ENCODE measurements at regions of chr2 and their contacts with region 1.

Region 1: DNA sequence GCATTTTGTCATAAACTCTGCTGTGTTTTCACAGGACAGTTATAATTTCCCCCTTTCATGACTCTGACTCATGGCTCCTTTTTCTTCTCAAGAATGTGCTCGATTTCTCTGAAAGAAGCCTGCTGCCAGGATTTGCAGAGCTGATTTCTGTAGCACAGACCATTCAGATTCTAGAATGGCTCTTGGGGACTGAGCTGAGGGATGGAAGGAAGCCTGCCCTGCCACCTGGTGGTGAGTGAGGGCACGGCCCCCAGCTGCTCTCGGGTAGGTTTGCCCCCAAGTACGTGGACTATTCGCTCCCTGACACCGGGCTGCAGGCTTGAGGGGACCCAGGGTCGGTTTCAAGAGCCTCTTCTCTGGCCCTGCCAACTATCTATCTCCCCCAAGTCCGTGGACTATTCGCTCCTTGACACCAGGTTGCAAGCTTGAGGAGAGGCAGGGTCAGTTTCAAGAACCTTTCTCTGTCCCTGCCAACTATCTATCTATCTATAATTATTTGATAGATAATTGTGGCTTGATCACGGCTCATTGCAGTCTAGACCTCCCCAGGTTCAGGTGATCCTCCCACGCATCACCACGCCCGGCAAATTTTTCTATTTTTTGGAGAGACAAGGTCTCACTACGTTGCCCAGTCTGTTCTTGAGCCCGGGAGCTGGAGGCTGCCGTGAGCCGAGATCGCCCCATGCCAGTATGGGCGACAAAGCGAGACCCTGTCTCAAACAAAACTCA is 1.4 kb upstream of the SMYD5 start:
- DNase-seq: peak; percentile 58 to 70 (median 65)
- H3K4me3 ChIP-seq: no peak overlapping the region
- H3K4me3 Mint-ChIP-seq: peak overlapping the region; percentile 45 to 83 (median 58)
- H3K27ac ChIP-seq: no peak overlapping the region
- H3K27ac Mint-ChIP-seq: peak overlapping the region in 5 of 7 donors; percentile 23 to 97 (median 76)
- H3K4me1 ChIP-seq: peaks cover 33% of the 10 kb centered on the region
- H3K4me1 Mint-ChIP-seq: peaks cover 25 to 38% (median 31%) of the 10 kb centered on the region in 4 donors
- H3K27me3 ChIP-seq: no peaks in the 10 kb centered on the region
- H3K27me3 Mint-ChIP-seq: peaks cover 8 to 9% of the 10 kb centered on the region in 2 donors

Region 2: GRCh38 chr2:73035899-73036711 is 176.5 kb before region 1 on chr2:
- CTCF ChIA-PET with region 1: no interaction called
- POLR2A ChIA-PET with region 1: no interaction called
- intact Hi-C with region 1: no loop called
- DNase-seq: no peak
- H3K4me3 ChIP-seq: no peak overlapping the region
- H3K4me3 Mint-ChIP-seq: no peak overlapping the region
- H3K27ac ChIP-seq: no peak overlapping the region
- H3K27ac Mint-ChIP-seq: peak overlapping the region in 1 of 7 donors; percentile 58
- H3K4me1 ChIP-seq: no peaks in the 10 kb centered on the region
- H3K4me1 Mint-ChIP-seq: no peaks in the 10 kb centered on the region
- H3K27me3 ChIP-seq: no peaks in the 10 kb centered on the region
- H3K27me3 Mint-ChIP-seq: no peaks in the 10 kb centered on the region

Region 3: DNA sequence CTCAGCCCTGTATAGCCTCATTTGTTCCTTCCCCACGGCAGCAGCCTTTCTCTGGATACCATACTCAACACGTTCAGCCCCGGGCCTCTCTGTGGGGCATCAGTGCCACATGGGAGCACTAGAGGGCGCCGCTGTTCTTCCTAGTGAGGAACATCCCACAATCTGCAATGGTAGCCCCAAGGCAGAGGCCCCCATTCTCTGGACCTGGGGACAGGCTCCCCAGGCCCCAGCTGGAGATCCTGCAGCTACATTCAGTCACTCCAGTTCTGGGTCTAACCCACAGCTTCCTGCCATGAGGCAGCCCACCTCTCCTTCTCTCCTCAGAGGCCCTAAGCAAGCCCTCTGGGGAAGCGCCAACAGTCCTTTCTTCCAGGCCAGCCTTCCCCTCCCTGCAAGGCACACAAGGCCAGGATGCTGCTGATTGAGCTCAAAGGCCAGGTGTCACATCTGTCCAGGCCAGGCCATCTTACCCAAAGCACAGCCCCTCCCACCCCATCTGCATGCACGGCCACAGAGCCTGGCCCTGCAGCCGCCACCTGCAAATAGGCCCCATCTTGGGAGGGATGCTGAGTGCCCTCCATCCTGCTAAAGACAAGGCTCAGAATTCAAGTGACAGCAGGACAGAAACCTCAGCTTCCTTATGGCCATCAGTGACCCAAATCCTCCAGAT is 126.8 kb before region 1 on chr2:
- CTCF ChIA-PET with region 1: interaction called, 62 read pairs
- POLR2A ChIA-PET with region 1: no interaction called
- intact Hi-C with region 1: no loop called
- DNase-seq: peak; percentile 71 to 80 (median 74)
- H3K4me3 ChIP-seq: no peak overlapping the region
- H3K4me3 Mint-ChIP-seq: no peak overlapping the region
- H3K27ac ChIP-seq: no peak overlapping the region
- H3K27ac Mint-ChIP-seq: peak overlapping the region in 4 of 7 donors; percentile 23 to 53 (median 37)
- H3K4me1 ChIP-seq: no peaks in the 10 kb centered on the region
- H3K4me1 Mint-ChIP-seq: peaks cover 1 to 8% (median 4%) of the 10 kb centered on the region in 4 donors
- H3K27me3 ChIP-seq: no peaks in the 10 kb centered on the region
- H3K27me3 Mint-ChIP-seq: no peaks in the 10 kb centered on the region

Region 4: DNA sequence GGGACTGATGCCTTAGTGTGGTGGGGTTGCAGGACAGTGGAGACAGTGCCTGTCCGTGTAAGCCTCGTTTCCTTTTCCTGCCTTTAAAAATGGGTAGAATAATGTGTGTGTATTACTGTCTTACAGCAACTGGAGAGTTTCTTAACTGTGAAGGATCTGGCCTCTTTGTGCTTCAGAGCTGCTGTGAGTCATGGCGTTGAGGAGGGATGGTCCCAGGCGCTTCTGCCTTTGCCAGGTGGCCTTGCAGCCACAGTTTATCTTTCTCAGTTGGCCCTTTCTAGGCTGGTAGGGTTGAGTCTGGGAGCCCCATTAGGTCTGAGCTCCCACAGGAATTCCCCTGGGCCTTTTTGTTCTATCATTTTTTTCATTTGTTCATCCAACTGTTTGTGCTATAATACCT is 11.2 kb after region 1 on chr2:
- CTCF ChIA-PET with region 1: interaction called, 23 read pairs
- POLR2A ChIA-PET with region 1: interaction called, 3 read pairs
- intact Hi-C with region 1: no loop called
- DNase-seq: no peak
- H3K4me3 ChIP-seq: no peak overlapping the region
- H3K4me3 Mint-ChIP-seq: no peak overlapping the region
- H3K27ac ChIP-seq: no peak overlapping the region
- H3K27ac Mint-ChIP-seq: no peak overlapping the region
- H3K4me1 ChIP-seq: no peaks in the 10 kb centered on the region
- H3K4me1 Mint-ChIP-seq: peaks cover 0 to 6% (median 0%) of the 10 kb centered on the region in 4 donors
- H3K27me3 ChIP-seq: no peaks in the 10 kb centered on the region
- H3K27me3 Mint-ChIP-seq: no peaks in the 10 kb centered on the region

Region 5: DNA sequence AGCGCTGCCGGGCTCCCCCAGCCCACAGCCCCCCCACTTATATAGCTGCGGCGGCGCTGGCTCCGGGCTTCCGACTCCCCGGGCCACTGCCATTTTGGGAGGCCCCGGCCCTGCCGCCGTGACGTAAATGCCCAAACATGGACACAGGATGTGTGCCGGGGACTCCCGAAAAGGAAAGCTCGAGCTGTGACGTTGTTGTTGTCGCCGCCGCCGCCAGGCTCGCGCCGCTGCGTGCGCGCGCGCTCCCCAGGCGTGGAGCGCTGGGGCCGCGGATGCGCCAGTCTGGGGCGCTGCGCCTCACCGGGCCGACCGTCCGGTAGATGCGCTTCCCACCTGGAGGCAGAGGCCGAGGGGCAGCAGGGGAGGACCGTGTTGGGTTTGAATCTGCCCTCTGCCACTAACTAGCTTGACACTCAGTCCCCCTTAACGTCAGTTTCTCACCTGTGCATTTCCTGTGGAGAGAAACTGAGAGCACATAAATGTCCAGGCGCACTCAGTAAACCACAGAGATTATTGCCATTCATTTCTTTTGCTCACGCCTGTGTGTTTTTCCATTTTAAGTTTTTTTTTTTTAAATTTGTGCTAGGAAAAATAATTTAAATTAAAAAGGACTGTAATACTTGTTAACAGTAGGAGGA is 81.0 kb after region 1 on chr2 and contains the start of gene EGR4:
- CTCF ChIA-PET with region 1: interaction called, 11 read pairs
- POLR2A ChIA-PET with region 1: no interaction called
- intact Hi-C with region 1: loop called (anchors 5 kb)
- DNase-seq: peak; percentile 90 to 97 (median 92)
- H3K4me3 ChIP-seq: peak within 1 kb of the TSS; percentile 55 to 71
- H3K4me3 Mint-ChIP-seq: peak within 1 kb of the TSS; percentile 64 to 87 (median 78)
- H3K27ac ChIP-seq: no peak within 1 kb of the TSS
- H3K27ac Mint-ChIP-seq: peak within 1 kb of the TSS in 4 of 7 donors; percentile 69 to 77 (median 72)
- H3K4me1 ChIP-seq: peaks cover 28% of the 10 kb centered on the region
- H3K4me1 Mint-ChIP-seq: peaks cover 6 to 22% (median 15%) of the 10 kb centered on the region in 4 donors
- H3K27me3 ChIP-seq: peaks cover 30% of the 10 kb centered on the region
- H3K27me3 Mint-ChIP-seq: peaks cover 37 to 42% of the 10 kb centered on the region in 2 donors
- total RNA-seq, gene EGR4: not detected

Region 6: GRCh38 chr2:73736855-73737779 is 524.5 kb after region 1 on chr2 and contains the start of gene TPRKB:
- CTCF ChIA-PET with region 1: interaction called, 3 read pairs
- POLR2A ChIA-PET with region 1: no interaction called
- intact Hi-C with region 1: loop called (anchors 5 kb)
- DNase-seq: peak; percentile 93 to 95 (median 94)
- H3K4me3 ChIP-seq: peak within 1 kb of the TSS; percentile 43 to 74
- H3K4me3 Mint-ChIP-seq: peak within 1 kb of the TSS; percentile 90 to 98 (median 95)
- H3K27ac ChIP-seq: peak within 1 kb of the TSS; percentile 68
- H3K27ac Mint-ChIP-seq: peak within 1 kb of the TSS; percentile 85 to 96 (median 93)
- H3K4me1 ChIP-seq: peaks cover 24% of the 10 kb centered on the region
- H3K4me1 Mint-ChIP-seq: peaks cover 15 to 25% (median 19%) of the 10 kb centered on the region in 4 donors
- H3K27me3 ChIP-seq: no peaks in the 10 kb centered on the region
- H3K27me3 Mint-ChIP-seq: no peaks in the 10 kb centered on the region
- total RNA-seq, gene TPRKB: 31.7 to 33.0 TPM

Measured in CD4-positive, alpha-beta memory T cell (primary cell).